ENCODE measurements at regions of chr11 and their contacts with region 1.

Region 1: GRCh38 chr11:66616379-66617154 is at the start of gene RBM14:
- DNase-seq: peak; percentile 96 to 99
- H3K4me3 ChIP-seq: peak within 1 kb of the TSS; percentile 81 to 99 (median 92)
- H3K27ac ChIP-seq: peak within 1 kb of the TSS; percentile 98
- H3K4me1 ChIP-seq: peaks cover 0 to 15% (median 3%) of the 10 kb centered on the region in 4 experiments; a peak in 4 of 7 replicates
- H3K27me3 ChIP-seq: no peaks in the 10 kb centered on the region
- CTCF ChIP-seq: no peak
- EP300 ChIP-seq: no peak
- POLR2A ChIP-seq: peak; percentile 92 to 98
- RAD21 ChIP-seq: no peak
- total RNA-seq, gene RBM14: 142 and 145 TPM in 2 replicates

Region 2: DNA sequence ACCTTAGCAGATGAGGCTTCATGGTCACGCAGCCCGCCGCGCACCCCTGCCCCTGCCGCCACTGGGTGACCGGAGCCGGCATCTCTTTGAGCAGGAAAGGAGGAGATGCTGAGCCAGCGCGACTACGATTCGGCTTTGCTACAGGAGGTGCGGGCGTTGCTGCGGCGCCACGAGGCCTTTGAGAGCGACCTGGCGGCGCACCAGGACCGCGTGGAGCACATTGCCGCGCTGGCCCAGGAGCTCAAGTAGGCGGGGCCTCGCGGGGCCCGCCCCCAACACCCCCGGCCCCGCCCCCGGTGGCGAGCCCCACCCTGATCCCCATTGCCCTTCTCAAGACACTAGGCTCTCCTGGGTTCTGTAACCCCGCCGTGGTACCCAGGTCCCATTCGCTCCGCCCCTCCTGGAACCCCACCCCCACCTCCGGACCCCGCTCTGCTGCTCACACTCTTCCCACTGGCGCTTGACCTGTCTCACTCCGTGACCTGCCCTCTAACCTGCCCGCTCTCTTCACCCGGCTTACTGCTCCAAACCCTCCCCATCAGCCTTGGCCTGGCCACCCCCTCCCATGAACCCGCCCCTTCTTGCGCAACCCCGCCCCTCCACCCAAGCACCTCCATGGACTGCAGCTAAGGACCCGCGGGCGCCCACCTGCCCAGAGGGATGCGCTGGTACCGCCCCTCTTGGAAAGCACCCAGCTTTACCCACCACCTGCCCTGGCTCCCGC is 57.3 kb before region 1 on chr11:
- CTCF ChIA-PET with region 1: no interaction called
- POLR2A ChIA-PET with region 1: interaction called, 11 read pairs
- DNase-seq: no peak
- H3K4me3 ChIP-seq: no peak overlapping the region
- H3K27ac ChIP-seq: no peak overlapping the region
- H3K4me1 ChIP-seq: peaks cover 0 to 2% (median 0%) of the 10 kb centered on the region in 4 experiments; a peak in 1 of 7 replicates
- H3K27me3 ChIP-seq: no peaks in the 10 kb centered on the region
- CTCF ChIP-seq: no peak
- EP300 ChIP-seq: no peak
- POLR2A ChIP-seq: no peak
- RAD21 ChIP-seq: no peak

Region 3: GRCh38 chr11:66568124-66568916 is 48.2 kb before region 1 on chr11 and contains the start of gene CTSF:
- CTCF ChIA-PET with region 1: no interaction called
- POLR2A ChIA-PET with region 1: interaction called, 13 read pairs
- DNase-seq: no peak
- H3K4me3 ChIP-seq: no peak within 1 kb of the TSS; a peak in 1 of 8 replicates
- H3K27ac ChIP-seq: no peak within 1 kb of the TSS; the same call in 1 of the 2 replicates
- H3K4me1 ChIP-seq: peaks cover 11 to 20% (median 14%) of the 10 kb centered on the region in 4 experiments; a peak in 6 of 7 replicates
- H3K27me3 ChIP-seq: no peaks in the 10 kb centered on the region
- CTCF ChIP-seq: no peak
- EP300 ChIP-seq: no peak
- POLR2A ChIP-seq: no peak
- RAD21 ChIP-seq: no peak
- total RNA-seq, gene CTSF: 0.36 and 0.58 TPM in 2 replicates

Region 4: GRCh38 chr11:66579017-66579606 is 37.5 kb before region 1 on chr11:
- CTCF ChIA-PET with region 1: interaction called, 6 read pairs
- POLR2A ChIA-PET with region 1: interaction called, 14 read pairs
- DNase-seq: peak in 1 of 2 experiments; percentile 97
- H3K4me3 ChIP-seq: no peak overlapping the region
- H3K27ac ChIP-seq: no peak overlapping the region
- H3K4me1 ChIP-seq: peaks cover 0 to 6% (median 4%) of the 10 kb centered on the region in 4 experiments; a peak in 5 of 7 replicates
- H3K27me3 ChIP-seq: peaks cover 0 to 6% (median 1%) of the 10 kb centered on the region in 4 experiments; a peak in 2 of 7 replicates
- CTCF ChIP-seq: peak; percentile 81 to 94 (median 90)
- EP300 ChIP-seq: 0 out of 3 replicates have a peak, but pooled peaks of 1 of the 2 experiments have one; percentile 26
- POLR2A ChIP-seq: no peak
- RAD21 ChIP-seq: peak; percentile 75 to 78